AG04450 (cell line): ENCODE measurements at regions of chr1 and their contacts with region 1.

Region 1: DNA sequence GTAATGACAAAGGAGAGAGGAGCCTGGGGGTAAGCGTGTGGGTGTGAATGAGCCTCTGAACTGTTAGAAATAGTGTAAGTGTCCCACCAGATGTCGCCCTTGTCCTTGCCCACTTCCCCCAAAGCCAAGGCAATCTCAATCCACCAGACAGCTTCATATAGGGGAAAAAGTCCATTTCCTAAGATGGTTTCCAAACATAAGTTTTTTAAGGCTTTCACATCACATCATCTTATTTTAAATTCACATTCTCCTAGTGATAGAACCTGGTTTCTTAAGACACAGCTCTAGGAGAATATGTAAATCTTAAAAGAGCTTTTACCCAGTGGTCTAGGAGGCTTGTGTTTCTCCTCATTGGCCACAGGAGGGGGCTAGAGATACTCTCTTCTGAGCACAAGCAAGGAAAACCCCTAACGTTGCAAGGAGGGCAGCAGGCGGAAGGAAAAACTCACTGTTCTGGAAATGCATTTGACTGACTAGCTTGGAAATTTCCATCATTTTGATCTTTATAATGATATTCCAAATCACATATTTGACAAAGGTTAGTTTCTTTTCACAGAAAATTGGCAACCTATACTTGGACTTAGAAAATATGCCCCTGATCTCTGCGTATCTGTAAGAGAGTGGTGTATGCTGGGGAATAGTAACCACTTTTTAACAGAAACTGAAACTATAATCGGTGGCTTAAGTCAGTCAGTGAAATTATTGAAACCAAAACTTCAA is 51.9 kb upstream of the LPAR3 start:
- DNase-seq: peak; percentile 90
- H3K4me3 ChIP-seq: peak overlapping the region; percentile 37
- H3K27ac ChIP-seq: no peak overlapping the region
- H3K27me3 ChIP-seq: peaks cover 8% of the 10 kb centered on the region
- CTCF ChIP-seq: peak; percentile 77

Region 2: GRCh38 chr1:84973498-84974334 is 28.8 kb after region 1 on chr1:
- CTCF ChIA-PET with region 1: interaction called, 13 read pairs
- POLR2A ChIA-PET with region 1: no interaction called
- DNase-seq: no peak
- H3K4me3 ChIP-seq: no peak overlapping the region
- H3K27ac ChIP-seq: no peak overlapping the region
- H3K27me3 ChIP-seq: no peaks in the 10 kb centered on the region
- CTCF ChIP-seq: no peak

Region 3: DNA sequence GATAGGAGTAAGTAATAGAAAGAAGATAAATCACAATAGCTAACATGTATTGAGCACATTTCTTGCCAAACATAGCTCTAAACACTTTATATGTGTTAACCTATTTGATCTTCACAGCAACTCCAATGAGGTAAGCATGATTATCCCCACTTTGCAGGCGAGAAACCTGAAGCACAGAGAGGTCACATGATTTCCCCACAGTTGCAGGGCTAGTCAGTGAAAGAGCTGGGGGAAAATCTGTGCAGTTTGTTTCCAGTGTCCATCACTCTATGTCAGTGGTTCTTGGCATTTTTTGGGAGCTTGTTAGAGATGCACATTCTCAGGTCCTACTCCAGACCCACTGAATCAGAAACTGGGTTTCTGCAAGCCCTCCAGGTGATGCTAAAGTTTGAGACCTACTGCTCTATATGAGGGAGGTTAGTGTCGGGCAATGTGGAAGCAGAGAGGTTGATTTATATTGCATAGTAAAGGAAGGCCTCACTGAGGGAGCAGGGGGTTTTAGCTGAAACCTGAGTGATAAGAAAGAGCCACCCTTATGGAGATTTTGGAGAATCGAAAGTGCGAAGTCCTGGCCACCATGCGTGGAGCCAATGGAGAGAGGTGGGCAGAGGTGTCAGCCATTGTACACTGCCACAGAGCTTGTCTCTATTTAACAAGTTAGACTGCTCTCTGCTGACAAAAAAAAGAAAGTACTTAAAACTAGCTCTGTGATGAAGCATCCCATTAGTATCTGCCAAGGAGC is 82.5 kb after region 1 on chr1:
- CTCF ChIA-PET with region 1: interaction called, 91 read pairs
- POLR2A ChIA-PET with region 1: interaction called, 6 read pairs
- DNase-seq: no peak
- H3K4me3 ChIP-seq: no peak overlapping the region
- H3K27ac ChIP-seq: no peak overlapping the region
- H3K27me3 ChIP-seq: peaks cover 3% of the 10 kb centered on the region
- CTCF ChIP-seq: no peak

Region 4: GRCh38 chr1:85048296-85049064 is 103.6 kb after region 1 on chr1 and contains the start of gene MCOLN3:
- CTCF ChIA-PET with region 1: interaction called, 10 read pairs
- POLR2A ChIA-PET with region 1: no interaction called
- DNase-seq: no peak
- H3K4me3 ChIP-seq: peak within 1 kb of the TSS; percentile 27; the same call in 1 of the 2 replicates
- H3K27ac ChIP-seq: no peak within 1 kb of the TSS
- H3K27me3 ChIP-seq: peaks cover 63% of the 10 kb centered on the region
- CTCF ChIP-seq: no peak
- polyA plus RNA-seq, gene MCOLN3: 0.05 TPM in 2 replicates

Region 5: GRCh38 chr1:85078903-85079302 is 134.0 kb after region 1 on chr1:
- CTCF ChIA-PET with region 1: interaction called, 103 read pairs
- POLR2A ChIA-PET with region 1: interaction called, 3 read pairs
- DNase-seq: no peak
- H3K4me3 ChIP-seq: no peak overlapping the region
- H3K27ac ChIP-seq: no peak overlapping the region
- H3K27me3 ChIP-seq: no peaks in the 10 kb centered on the region
- CTCF ChIP-seq: peak; percentile 46

Region 6: GRCh38 chr1:85224734-85225623 is 280.1 kb after region 1 on chr1:
- CTCF ChIA-PET with region 1: interaction called, 14 read pairs
- POLR2A ChIA-PET with region 1: no interaction called
- DNase-seq: no peak
- H3K4me3 ChIP-seq: no peak overlapping the region
- H3K27ac ChIP-seq: no peak overlapping the region
- H3K27me3 ChIP-seq: no peaks in the 10 kb centered on the region
- CTCF ChIP-seq: no peak